ENCODE measurements at regions of chr18 and their contacts with region 1.

Region 1: DNA sequence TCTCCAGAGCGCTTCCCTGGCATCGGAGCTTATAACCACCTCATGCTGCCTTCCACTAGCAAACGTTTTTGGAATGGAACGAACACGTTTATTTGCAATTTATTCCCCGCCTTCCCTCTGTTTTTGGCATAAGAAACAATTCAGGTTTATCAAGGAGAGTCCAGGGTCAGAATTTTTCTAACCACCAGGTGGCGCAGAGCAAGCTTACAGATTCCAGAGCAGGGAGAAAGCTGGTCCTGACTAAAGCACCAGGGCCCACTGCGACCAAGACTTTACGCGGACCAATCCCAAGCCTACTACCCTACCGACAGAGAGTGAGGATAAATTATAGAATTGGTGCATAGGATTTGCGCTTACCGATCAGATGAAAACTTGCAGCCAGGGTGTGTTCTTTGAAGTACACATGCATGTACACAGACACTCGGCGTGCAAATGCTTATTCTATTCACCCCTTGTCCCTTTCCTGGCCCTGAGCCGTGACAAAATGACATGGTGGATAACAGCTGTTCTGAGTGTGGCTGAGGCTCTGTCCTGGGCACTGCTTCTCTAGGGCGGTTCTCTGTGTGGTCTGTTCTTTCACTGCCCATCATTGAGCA is 34.7 kb downstream of the NAPG start:
- DNase-seq: peak; percentile 55
- H3K4me3 ChIP-seq: no peak overlapping the region
- H3K27ac ChIP-seq: no peak overlapping the region
- H3K4me1 ChIP-seq: peaks cover 25% of the 10 kb centered on the region
- H3K27me3 ChIP-seq: no peaks in the 10 kb centered on the region
- CTCF ChIP-seq: peak; percentile 69 to 81

Region 2: GRCh38 chr18:10689236-10690034 is 128.9 kb after region 1 on chr18:
- CTCF ChIA-PET with region 1: no interaction called
- dilution Hi-C with region 1: no loop called
- in situ Hi-C with region 1: no loop called
- intact Hi-C with region 1: loop called (anchors 5 kb)
- DNase-seq: no peak
- H3K4me3 ChIP-seq: no peak overlapping the region
- H3K27ac ChIP-seq: no peak overlapping the region
- H3K4me1 ChIP-seq: no peaks in the 10 kb centered on the region
- H3K27me3 ChIP-seq: no peaks in the 10 kb centered on the region
- CTCF ChIP-seq: no peak

Region 3: DNA sequence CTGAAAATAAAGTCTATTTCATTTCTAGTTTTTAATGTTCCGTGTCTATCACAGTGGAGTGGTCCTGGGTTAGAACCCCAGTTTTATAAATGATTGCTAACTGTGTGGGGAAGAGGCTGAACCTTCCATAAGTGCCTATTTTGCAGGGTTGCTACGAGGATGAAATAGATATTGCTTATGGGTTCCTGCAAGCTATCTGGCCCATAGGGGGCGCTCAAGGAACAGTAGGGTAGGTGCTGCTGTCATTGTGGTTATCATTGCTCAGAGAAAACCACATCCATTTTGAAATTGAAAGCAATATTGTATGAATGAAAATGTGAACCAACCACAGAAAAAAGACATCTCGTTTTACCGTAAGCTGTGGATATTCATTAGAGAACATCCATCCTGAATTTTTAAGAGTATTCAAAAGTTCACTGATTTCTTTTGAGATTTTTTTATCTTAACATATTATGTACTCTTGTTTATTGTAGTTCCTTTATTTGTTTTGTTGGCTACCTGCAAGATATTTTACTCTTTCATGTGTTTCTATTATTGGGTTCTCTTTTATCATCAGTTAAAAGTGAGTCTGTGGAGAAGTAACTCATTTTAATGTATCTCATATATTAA is 226.8 kb after region 1 on chr18:
- CTCF ChIA-PET with region 1: interaction called, 6 read pairs
- dilution Hi-C with region 1: no loop called
- in situ Hi-C with region 1: no loop called
- intact Hi-C with region 1: loop called (anchors 2 kb)
- DNase-seq: peak; percentile 58
- H3K4me3 ChIP-seq: no peak overlapping the region
- H3K27ac ChIP-seq: no peak overlapping the region
- H3K4me1 ChIP-seq: no peaks in the 10 kb centered on the region
- H3K27me3 ChIP-seq: no peaks in the 10 kb centered on the region
- CTCF ChIP-seq: peak; percentile 55 to 60

Region 4: DNA sequence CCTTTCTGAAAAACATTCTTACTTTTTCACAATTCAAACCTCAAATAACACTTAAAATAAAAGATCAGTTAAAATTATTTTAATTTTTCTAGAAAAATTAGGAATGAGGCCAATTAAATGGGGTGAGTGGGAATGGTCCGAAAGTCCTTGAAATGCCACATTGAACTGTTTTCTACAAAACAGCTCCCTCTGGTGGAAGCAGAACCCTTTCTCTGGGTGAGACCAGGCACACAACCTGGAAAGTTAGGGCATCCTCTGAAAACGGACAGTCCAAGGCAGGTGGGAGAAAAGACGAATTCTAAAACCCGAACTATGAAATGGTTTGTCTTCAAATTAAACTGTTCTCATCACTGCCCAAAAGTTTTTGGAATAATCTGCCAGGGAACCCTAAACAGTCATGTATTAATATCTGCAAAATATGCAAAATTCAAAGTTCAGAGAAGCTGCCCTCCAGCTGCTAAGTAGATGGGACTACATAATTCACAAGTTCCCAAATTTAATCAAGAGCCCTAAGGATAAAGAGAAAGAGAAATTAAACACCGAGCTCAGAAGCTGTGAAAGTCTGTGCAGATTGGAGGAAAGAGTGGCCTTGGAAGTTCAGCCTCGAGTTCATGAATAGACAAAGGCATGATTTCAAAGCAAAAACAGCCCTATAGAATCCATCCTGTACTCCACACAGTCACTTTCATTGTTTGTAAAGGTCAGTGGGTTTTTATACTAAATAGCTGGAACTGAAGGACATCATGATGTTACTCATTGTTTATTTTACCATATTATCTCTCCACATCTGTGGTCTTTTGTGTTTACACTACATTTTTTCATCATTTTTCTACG is 480.5 kb after region 1 on chr18:
- CTCF ChIA-PET with region 1: no interaction called
- dilution Hi-C with region 1: no loop called
- in situ Hi-C with region 1: no loop called
- intact Hi-C with region 1: loop called (anchors 2 kb)
- DNase-seq: peak; percentile 1
- H3K4me3 ChIP-seq: no peak overlapping the region
- H3K27ac ChIP-seq: no peak overlapping the region
- H3K4me1 ChIP-seq: no peaks in the 10 kb centered on the region
- H3K27me3 ChIP-seq: no peaks in the 10 kb centered on the region
- CTCF ChIP-seq: peak; percentile 18 to 53

Measured in mammary epithelial cell (primary cell).